Activated CD8-positive, alpha-beta memory T cell treated with anti-CD3 and anti-CD28 coated beads, Interleukin-2, amount 10 ng/mL, durations not matched to agents 7 days and 5 days (primary cell): ENCODE measurements at regions of chr1 and their contacts with region 1.

Region 1: GRCh38 chr1:24541711-24542346 is 14.1 kb upstream of the NCMAP start:
- DNase-seq: peak; percentile 50
- ATAC-seq: no peak
- H3K4me3 Mint-ChIP-seq: no peak overlapping the region
- H3K27ac Mint-ChIP-seq: peak overlapping the region; percentile 81
- H3K4me1 Mint-ChIP-seq: peaks cover 56% of the 10 kb centered on the region
- H3K27me3 Mint-ChIP-seq: no peaks in the 10 kb centered on the region

Region 2: GRCh38 chr1:24362982-24363614 is 178.7 kb before region 1 on chr1:
- CTCF ChIA-PET with region 1: no interaction called
- DNase-seq: no peak
- ATAC-seq: no peak
- H3K4me3 Mint-ChIP-seq: no peak overlapping the region
- H3K27ac Mint-ChIP-seq: no peak overlapping the region
- H3K4me1 Mint-ChIP-seq: peaks cover 24% of the 10 kb centered on the region
- H3K27me3 Mint-ChIP-seq: no peaks in the 10 kb centered on the region

Region 3: GRCh38 chr1:24384251-24385090 is 157.4 kb before region 1 on chr1:
- CTCF ChIA-PET with region 1: no interaction called
- DNase-seq: peak; percentile 75
- ATAC-seq: peak; percentile 91
- H3K4me3 Mint-ChIP-seq: peak overlapping the region; percentile 30
- H3K27ac Mint-ChIP-seq: peak overlapping the region; percentile 87
- H3K4me1 Mint-ChIP-seq: peaks cover 33% of the 10 kb centered on the region
- H3K27me3 Mint-ChIP-seq: no peaks in the 10 kb centered on the region

Region 4: DNA sequence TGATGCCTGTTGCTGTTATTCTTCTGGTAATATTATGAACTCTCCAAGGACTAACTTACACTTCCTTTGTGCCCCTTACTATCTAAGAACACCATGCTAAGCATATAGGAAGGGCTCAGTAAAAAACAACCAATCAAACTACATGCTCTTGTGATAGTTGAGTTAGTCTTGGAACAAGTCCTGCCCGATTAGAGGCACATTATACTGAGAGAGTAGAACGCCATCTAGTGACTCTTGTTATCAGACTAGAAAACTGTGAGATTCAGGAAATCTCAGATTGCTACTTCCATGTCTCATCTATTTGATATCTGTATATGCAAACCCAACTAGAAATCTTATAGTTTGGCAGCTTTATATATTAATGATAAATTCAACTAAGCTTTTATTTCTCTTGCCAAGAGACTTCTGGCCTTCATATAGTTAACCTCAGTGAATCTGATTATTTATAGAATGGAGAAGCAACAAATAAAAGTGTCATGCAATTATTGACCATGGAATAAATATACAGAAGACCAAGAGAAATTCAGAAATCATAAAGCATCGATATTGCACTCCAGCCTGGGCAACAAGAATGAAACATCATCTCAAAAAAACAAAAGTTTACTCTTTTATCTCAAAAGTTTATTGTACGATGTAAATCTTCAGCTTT is 93.5 kb after region 1 on chr1:
- CTCF ChIA-PET with region 1: interaction called, 28 read pairs
- DNase-seq: no peak
- ATAC-seq: peak; percentile 79
- H3K4me3 Mint-ChIP-seq: no peak overlapping the region
- H3K27ac Mint-ChIP-seq: no peak overlapping the region
- H3K4me1 Mint-ChIP-seq: peaks cover 6% of the 10 kb centered on the region
- H3K27me3 Mint-ChIP-seq: peaks cover 32% of the 10 kb centered on the region

Region 5: DNA sequence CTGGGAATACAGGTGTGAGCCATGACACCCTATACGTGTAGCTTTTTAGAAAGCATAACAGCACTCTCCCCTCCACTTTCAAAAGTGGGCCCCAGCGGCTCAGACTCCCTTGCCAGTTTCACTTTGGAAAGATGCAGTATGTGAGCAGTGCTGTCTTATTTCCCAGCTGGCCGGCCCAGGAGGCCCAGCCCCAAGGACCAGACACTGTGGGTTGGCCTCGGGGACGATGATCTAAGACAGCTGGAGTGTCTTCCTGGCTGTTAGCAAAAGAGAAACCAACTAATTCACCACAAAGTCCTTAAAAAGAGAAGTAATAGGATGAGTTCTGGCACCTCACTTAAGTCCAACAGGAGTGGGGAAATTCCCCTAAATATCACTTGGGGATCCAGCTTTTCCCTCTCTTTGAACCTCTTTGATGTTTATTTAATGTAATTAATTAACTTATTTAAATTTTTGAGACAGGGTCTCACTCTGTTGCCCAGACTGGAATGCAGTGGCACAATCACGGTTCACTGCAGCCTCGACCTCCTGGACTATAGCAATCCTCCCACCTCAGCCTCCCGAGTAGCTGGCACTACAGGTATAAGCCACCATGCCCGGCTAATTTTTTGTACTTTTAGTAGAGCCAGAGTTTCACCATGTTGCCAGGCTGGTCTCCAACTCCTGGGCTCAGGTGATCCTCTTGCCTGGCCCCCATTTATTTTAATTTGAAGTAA is 185.8 kb after region 1 on chr1:
- CTCF ChIA-PET with region 1: no interaction called
- DNase-seq: no peak
- ATAC-seq: peak; percentile 40
- H3K4me3 Mint-ChIP-seq: no peak overlapping the region
- H3K27ac Mint-ChIP-seq: no peak overlapping the region
- H3K4me1 Mint-ChIP-seq: peaks cover 7% of the 10 kb centered on the region
- H3K27me3 Mint-ChIP-seq: peaks cover 19% of the 10 kb centered on the region